ENCODE measurements at regions of chr3 and their contacts with region 1.

Region 1: GRCh38 chr3:172132159-172132586 is 92.8 kb downstream of the FNDC3B start:
- DNase-seq: no peak
- ATAC-seq: peak; percentile 78
- H3K4me3 Mint-ChIP-seq: peak overlapping the region; percentile 3
- H3K27ac Mint-ChIP-seq: peak overlapping the region; percentile 67
- H3K4me1 Mint-ChIP-seq: peaks cover 44% of the 10 kb centered on the region
- H3K27me3 Mint-ChIP-seq: no peaks in the 10 kb centered on the region

Region 2: DNA sequence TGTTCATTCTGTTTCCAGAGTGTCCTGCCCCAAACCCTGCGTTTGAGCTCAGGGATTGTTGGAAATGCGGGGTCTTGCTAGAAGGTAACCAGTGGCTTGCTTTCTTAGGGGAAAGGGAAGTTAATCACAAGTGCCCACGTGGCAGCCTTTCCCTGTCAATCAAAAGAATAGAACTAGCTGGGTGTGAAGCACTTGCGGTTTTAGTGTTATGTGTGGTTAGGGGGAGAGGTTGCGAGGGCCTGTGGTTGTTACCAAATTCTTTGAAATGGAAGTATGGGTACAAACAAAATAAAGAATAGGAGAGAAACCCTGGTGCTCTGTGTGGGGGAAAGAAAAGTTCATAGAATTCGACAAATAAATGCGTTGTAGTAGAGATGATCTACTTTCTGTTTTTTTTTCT is 25.2 kb before region 1 on chr3:
- POLR2A ChIA-PET with region 1: interaction called, 15 read pairs
- DNase-seq: peak; percentile 68
- ATAC-seq: peak; percentile 65
- H3K4me3 Mint-ChIP-seq: peak overlapping the region; percentile 86
- H3K27ac Mint-ChIP-seq: peak overlapping the region; percentile 93
- H3K4me1 Mint-ChIP-seq: peaks cover 53% of the 10 kb centered on the region
- H3K27me3 Mint-ChIP-seq: peaks cover 6% of the 10 kb centered on the region